ENCODE measurements at regions of chr5 and their contacts with region 1.

Region 1: DNA sequence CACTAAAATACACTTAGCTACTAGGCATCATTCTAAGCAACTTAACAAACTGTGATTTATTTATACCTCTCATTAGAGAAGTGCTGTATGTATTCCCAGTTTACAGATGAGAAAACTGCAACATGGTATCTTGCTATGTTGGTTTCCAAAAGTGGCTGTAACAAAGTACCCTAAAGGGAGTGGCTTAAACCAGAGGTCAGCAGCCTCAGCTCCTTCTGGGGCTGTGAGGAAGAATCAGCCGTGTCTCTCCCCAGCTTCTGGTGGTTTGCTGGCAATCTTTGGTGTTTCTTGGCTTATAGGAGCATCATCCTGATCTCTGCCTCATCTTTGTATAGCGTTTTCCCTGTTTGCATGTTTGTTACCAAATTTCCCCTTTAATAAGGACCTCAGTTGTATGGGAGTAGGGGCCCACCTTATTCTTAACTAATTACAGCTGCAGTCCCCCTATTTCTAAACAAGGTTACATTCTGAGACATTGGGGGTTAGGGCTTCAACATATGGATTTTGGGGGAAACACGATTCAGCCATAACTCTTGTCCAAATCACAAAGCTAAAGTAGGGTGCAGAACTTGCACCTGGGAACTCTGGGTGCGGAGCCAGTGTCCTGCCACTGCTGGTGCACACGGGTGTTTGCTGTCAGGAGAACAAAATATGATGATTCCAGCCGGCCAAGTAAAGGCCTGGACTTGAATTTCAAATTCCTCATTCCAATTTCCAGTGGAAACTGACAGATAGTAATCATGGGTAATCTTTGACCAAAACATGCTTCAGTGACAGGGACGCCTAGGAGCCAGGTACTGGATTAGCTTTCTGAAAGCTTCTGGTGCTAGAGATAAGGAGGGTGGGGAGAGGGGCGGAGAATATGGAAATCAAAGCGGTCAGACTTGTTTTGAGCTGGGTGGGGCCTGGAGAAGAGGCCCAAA is 43.3 kb downstream of the RAI14 start:
- DNase-seq: peak; percentile 83 to 87
- H3K4me3 ChIP-seq: no peak overlapping the region
- H3K4me3 Mint-ChIP-seq: peak overlapping the region; percentile 68
- H3K27ac Mint-ChIP-seq: peak overlapping the region; percentile 62
- H3K4me1 ChIP-seq: peaks cover 65% of the 10 kb centered on the region
- H3K4me1 Mint-ChIP-seq: peaks cover 50% of the 10 kb centered on the region
- H3K27me3 ChIP-seq: no peaks in the 10 kb centered on the region
- H3K27me3 Mint-ChIP-seq: no peaks in the 10 kb centered on the region
- CTCF ChIP-seq: no peak

Region 2: DNA sequence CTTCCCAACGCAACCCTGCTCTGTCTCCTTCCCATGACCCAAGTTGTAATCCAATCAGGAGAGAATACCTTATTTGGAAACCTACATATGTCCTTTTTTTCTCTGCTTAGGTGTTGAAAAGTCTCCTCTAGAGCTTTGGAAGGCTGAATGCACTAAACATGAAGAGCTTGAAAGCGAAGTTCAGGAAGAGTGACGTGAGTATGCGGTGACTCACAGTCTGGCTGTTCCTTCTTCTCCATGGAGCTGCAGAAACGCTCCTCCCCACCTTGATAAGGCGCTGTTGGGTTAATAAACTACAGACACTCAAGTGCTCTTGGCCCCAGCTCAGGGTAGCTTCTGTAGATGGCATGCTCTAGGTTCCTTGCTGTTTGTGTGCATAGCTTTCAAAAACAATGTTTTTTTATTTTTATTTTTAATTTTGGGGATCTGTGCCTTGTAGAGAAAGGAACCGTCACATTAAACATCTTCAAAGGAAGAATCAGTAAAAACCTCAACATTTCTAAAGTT is 12.6 kb before region 1 on chr5:
- CTCF ChIA-PET with region 1: interaction called, 3 read pairs
- POLR2A ChIA-PET with region 1: interaction called, 9 read pairs
- intact Hi-C with region 1: loop called (anchors 1 kb)
- DNase-seq: peak; percentile 85 to 90
- H3K4me3 ChIP-seq: no peak overlapping the region
- H3K4me3 Mint-ChIP-seq: peak overlapping the region; percentile 67
- H3K27ac Mint-ChIP-seq: peak overlapping the region; percentile 88
- H3K4me1 ChIP-seq: peaks cover 53% of the 10 kb centered on the region
- H3K4me1 Mint-ChIP-seq: peaks cover 43% of the 10 kb centered on the region
- H3K27me3 ChIP-seq: no peaks in the 10 kb centered on the region
- H3K27me3 Mint-ChIP-seq: no peaks in the 10 kb centered on the region
- CTCF ChIP-seq: no peak

Region 3: DNA sequence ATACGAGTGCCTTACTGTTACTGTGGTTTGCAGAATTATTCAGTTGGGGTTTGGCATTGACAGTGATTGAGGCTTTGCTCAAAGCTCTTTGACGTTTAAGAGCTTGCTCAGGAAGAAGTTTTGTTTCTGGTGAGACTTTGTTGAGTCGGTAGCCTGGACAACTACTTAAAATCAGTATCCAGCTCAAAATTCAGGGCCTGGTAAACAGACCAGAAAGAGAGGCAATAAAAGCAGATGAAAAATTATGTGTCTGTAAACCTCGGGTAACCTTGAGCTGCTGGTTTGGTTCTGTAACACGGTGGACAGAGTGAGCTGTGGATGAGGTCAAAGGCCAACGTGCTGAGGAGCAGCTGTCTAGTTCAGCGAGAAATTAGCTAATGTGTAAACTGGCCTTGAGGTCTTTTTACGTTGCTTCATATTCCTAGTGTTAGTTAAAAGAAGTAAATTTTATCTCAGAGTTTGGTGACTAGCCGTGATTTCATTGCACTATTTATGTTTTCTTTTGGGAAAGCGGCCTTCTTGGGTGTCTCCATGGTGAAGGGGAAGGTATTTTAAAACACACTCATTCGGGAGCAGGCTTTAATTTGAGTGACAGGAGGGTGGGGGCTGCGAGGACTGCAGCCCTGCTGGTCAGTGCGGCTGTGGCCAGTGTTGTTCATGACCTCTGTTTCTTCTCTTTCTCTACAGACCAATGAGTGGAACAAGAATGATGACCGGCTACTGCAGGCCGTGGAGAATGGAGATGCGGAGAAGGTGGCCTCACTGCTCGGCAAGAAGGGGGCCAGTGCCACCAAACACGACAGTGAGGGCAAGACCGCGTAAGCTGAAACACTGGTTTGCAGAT is 57.6 kb after region 1 on chr5:
- CTCF ChIA-PET with region 1: interaction called, 3 read pairs
- POLR2A ChIA-PET with region 1: no interaction called
- intact Hi-C with region 1: loop called (anchors 5 kb)
- DNase-seq: peak; percentile 66 to 77
- H3K4me3 ChIP-seq: no peak overlapping the region
- H3K4me3 Mint-ChIP-seq: peak overlapping the region; percentile 40
- H3K27ac Mint-ChIP-seq: peak overlapping the region; percentile 50
- H3K4me1 ChIP-seq: peaks cover 22% of the 10 kb centered on the region
- H3K4me1 Mint-ChIP-seq: peaks cover 38% of the 10 kb centered on the region
- H3K27me3 ChIP-seq: no peaks in the 10 kb centered on the region
- H3K27me3 Mint-ChIP-seq: no peaks in the 10 kb centered on the region
- CTCF ChIP-seq: no peak

Region 4: GRCh38 chr5:34822956-34823715 is 123.7 kb after region 1 on chr5:
- CTCF ChIA-PET with region 1: no interaction called
- POLR2A ChIA-PET with region 1: no interaction called
- intact Hi-C with region 1: loop called (anchors 5 kb)
- DNase-seq: peak in 1 of 2 experiments; percentile 33
- H3K4me3 ChIP-seq: no peak overlapping the region
- H3K4me3 Mint-ChIP-seq: no peak overlapping the region
- H3K27ac Mint-ChIP-seq: no peak overlapping the region
- H3K4me1 ChIP-seq: peaks cover 14% of the 10 kb centered on the region; the same call in 1 of the 2 replicates
- H3K4me1 Mint-ChIP-seq: peaks cover 15% of the 10 kb centered on the region
- H3K27me3 ChIP-seq: no peaks in the 10 kb centered on the region
- H3K27me3 Mint-ChIP-seq: no peaks in the 10 kb centered on the region
- CTCF ChIP-seq: no peak

Region 5: GRCh38 chr5:34898258-34898895 is 199.0 kb after region 1 on chr5:
- CTCF ChIA-PET with region 1: no interaction called
- POLR2A ChIA-PET with region 1: no interaction called
- intact Hi-C with region 1: loop called (anchors 5 kb)
- DNase-seq: peak; percentile 68 to 75
- H3K4me3 ChIP-seq: no peak overlapping the region
- H3K4me3 Mint-ChIP-seq: no peak overlapping the region
- H3K27ac Mint-ChIP-seq: peak overlapping the region; percentile 45
- H3K4me1 ChIP-seq: peaks cover 15% of the 10 kb centered on the region; the same call in 1 of the 2 replicates
- H3K4me1 Mint-ChIP-seq: no peaks in the 10 kb centered on the region
- H3K27me3 ChIP-seq: no peaks in the 10 kb centered on the region
- H3K27me3 Mint-ChIP-seq: no peaks in the 10 kb centered on the region
- CTCF ChIP-seq: peak; percentile 85 to 93

Measured in Caco-2 (cell line).